Prostate gland (tissue), 2 donors: ENCODE measurements at regions of chr6 and their contacts with region 1.

Region 1: GRCh38 chr6:145734486-145735355 is 599 bp downstream of the EPM2A start:
- DNase-seq: peak; percentile 82
- H3K4me3 ChIP-seq: peak overlapping the region; percentile 70 to 76
- H3K27ac ChIP-seq: peak overlapping the region; percentile 91 to 93
- H3K4me1 ChIP-seq: no peaks in the 10 kb centered on the region
- H3K27me3 ChIP-seq: no peaks in the 10 kb centered on the region
- CTCF ChIP-seq: no peak
- POLR2A ChIP-seq: no peak

Region 2: GRCh38 chr6:144223686-144224085 is 1511.0 kb before region 1 on chr6:
- intact Hi-C with region 1: no loop called
- DNase-seq: no peak
- H3K4me3 ChIP-seq: no peak overlapping the region
- H3K27ac ChIP-seq: no peak overlapping the region
- H3K4me1 ChIP-seq: no peaks in the 10 kb centered on the region
- H3K27me3 ChIP-seq: no peaks in the 10 kb centered on the region
- CTCF ChIP-seq: no peak
- POLR2A ChIP-seq: no peak

Region 3: DNA sequence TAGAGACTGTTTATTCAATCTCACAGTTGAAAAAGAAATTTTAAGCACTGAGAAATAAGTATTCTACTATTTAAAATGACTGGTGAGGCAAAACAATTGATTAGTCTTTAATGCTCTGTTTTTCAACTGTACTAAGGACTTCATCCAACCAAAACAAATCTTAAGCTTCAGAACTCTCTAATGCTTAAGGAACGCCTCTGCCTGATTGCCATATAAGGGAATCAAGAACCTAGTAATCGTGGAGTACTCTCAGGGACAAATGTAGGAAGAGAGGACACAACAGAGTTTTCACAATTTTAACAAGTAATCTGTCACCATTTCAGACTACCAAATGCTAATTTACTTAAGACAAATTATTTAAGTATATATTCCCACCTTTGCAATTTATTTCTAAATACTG is 63.8 kb after region 1 on chr6:
- intact Hi-C with region 1: loop called (anchors 5 kb)
- DNase-seq: no peak
- H3K4me3 ChIP-seq: no peak overlapping the region
- H3K27ac ChIP-seq: no peak overlapping the region
- H3K4me1 ChIP-seq: no peaks in the 10 kb centered on the region
- H3K27me3 ChIP-seq: no peaks in the 10 kb centered on the region
- CTCF ChIP-seq: no peak
- POLR2A ChIP-seq: no peak

Region 4: DNA sequence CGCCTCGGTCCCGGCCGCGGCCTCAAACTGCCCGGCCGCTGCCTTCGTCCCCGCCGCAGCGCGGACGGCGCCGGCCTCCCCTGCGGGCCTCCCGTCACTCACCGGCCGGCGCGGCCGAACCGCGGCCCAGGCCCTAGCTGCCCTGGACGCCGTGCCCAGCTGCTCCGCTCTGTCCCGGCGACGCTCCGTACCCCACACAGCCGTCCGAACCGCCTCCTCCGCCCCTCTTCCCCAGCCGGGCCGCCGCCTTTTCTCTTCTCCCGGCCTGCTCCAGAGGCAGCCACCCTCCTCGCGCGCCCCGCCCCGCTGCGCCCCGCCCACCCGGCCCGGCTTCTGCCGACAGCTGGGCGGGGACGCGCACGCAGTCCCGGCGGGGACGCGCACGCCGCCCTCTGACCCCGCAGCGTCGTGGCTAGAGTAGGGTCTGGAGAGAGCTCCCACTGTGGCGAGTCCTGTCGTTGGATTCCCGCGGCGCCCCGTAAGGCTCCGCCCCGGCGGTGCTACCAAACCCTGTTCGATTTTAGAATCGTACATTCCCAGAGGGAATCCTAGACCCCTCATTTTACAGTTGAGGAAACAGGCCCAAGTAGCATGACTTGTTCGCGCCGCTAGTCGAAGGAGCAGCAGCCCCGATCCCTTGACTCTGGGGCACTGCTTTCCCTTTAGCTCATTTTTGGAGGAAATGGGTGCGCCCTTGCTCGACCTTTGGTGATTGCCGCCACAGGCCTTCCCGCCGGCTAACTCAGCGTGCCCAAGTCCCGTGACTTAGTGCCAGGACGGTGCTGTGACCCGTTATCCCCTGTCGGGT is 80.0 kb after region 1 on chr6 and contains the start of gene FBXO30:
- intact Hi-C with region 1: loop called (anchors 5 kb)
- DNase-seq: peak; percentile 80
- H3K4me3 ChIP-seq: peak within 1 kb of the TSS; percentile 58 to 67
- H3K27ac ChIP-seq: peak within 1 kb of the TSS; percentile 79 to 87
- H3K4me1 ChIP-seq: no peaks in the 10 kb centered on the region
- H3K27me3 ChIP-seq: no peaks in the 10 kb centered on the region
- CTCF ChIP-seq: peak in 1 of 4 experiments; percentile 22
- POLR2A ChIP-seq: peak; percentile 78
- total RNA-seq, gene FBXO30: 6.5 to 9.6 TPM

Region 5: GRCh38 chr6:145887969-145888368 is 153.2 kb after region 1 on chr6:
- intact Hi-C with region 1: loop called (anchors 2 kb)
- DNase-seq: peak; percentile 4
- H3K4me3 ChIP-seq: no peak overlapping the region
- H3K27ac ChIP-seq: no peak overlapping the region
- H3K4me1 ChIP-seq: peaks cover 7% of the 10 kb centered on the region
- H3K27me3 ChIP-seq: no peaks in the 10 kb centered on the region
- CTCF ChIP-seq: peak in 2 of 4 experiments; percentile 27 to 51
- POLR2A ChIP-seq: no peak

Region 6: GRCh38 chr6:145963216-145964068 is 228.7 kb after region 1 on chr6:
- intact Hi-C with region 1: loop called (anchors 2 kb)
- DNase-seq: peak; percentile 21
- H3K4me3 ChIP-seq: peak overlapping the region; percentile 69 to 75
- H3K27ac ChIP-seq: peak overlapping the region; percentile 81
- H3K4me1 ChIP-seq: no peaks in the 10 kb centered on the region
- H3K27me3 ChIP-seq: no peaks in the 10 kb centered on the region
- CTCF ChIP-seq: no peak
- POLR2A ChIP-seq: no peak